Vagina (tissue), 2 donors: ENCODE measurements at regions of chr6 and their contacts with region 1.

Region 1: DNA sequence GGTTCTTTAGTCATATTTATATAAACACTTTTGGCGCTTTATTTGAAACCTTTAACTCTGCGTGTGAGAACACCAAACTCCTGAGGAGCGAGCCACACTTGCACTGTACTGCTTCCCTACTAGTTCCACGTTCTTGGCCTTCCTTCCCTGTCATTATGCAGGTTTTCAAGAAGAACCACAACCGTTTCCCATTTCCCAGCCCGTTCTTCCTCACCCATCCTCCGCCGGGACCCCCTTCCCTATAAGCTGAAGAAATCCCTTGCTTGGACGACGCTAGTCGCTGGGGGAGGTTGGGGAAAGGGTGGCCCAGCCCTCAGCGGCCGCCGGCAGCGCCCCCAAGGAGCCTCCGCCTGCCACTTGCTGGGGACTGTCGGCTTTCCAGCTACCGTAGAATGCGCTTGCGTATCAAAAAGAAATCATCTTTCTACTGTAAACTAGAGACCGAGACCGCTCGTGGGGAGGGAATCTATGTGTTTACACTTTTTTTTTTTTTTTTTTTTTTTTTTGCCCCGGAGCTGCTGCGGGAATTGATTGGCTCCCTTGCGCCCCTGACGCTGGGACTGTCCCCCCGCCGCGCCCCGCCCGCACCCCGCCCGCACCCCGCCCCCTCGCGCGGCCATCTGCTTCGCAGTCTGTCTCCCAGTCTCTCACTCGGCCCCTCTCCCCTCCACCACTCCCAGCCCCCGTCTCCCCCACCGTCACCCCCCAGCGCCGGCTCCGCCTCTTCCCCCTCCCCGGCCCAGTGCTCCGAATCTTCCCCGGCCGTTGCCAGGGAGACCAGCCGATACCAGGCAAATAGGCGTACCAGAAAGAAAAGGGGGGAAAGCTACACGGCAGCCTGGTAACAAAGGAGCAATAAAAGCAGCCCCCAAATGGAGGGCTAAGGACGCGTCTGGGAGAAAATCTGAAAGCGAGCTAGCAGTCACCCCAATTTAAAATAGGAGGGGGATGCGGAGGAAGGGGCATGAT is 2.3 kb upstream of the MARCKS start:
- DNase-seq: peak in 1 of 2 donors; percentile 92
- H3K4me3 ChIP-seq: peak overlapping the region; percentile 72 to 79
- H3K27ac ChIP-seq: peak overlapping the region; percentile 96
- H3K4me1 ChIP-seq: no peaks in the 10 kb centered on the region
- H3K27me3 ChIP-seq: no peaks in the 10 kb centered on the region
- CTCF ChIP-seq: no peak
- POLR2A ChIP-seq: no peak

Region 2: GRCh38 chr6:113570641-113571040 is 284.2 kb before region 1 on chr6:
- intact Hi-C with region 1: loop called (anchors 5 kb)
- DNase-seq: no peak
- H3K4me3 ChIP-seq: no peak overlapping the region
- H3K27ac ChIP-seq: no peak overlapping the region
- H3K4me1 ChIP-seq: no peaks in the 10 kb centered on the region
- H3K27me3 ChIP-seq: no peaks in the 10 kb centered on the region
- CTCF ChIP-seq: no peak
- POLR2A ChIP-seq: no peak